OCI-LY7 (cell line): ENCODE measurements at regions of chr4 and their contacts with region 1.

Region 1: GRCh38 chr4:186297013-186297645 is 31.1 kb downstream of the F11 start:
- DNase-seq: peak; percentile 30
- H3K4me3 ChIP-seq: no peak overlapping the region
- H3K27ac ChIP-seq: no peak overlapping the region
- H3K4me1 ChIP-seq: no peaks in the 10 kb centered on the region
- CTCF ChIP-seq: peak; percentile 85

Region 2: GRCh38 chr4:185716577-185717376 is 580.4 kb before region 1 on chr4:
- CTCF ChIA-PET with region 1: no interaction called
- POLR2A ChIA-PET with region 1: no interaction called
- intact Hi-C with region 1: no loop called
- DNase-seq: no peak
- H3K4me3 ChIP-seq: no peak overlapping the region
- H3K27ac ChIP-seq: no peak overlapping the region
- H3K4me1 ChIP-seq: no peaks in the 10 kb centered on the region
- CTCF ChIP-seq: no peak

Region 3: DNA sequence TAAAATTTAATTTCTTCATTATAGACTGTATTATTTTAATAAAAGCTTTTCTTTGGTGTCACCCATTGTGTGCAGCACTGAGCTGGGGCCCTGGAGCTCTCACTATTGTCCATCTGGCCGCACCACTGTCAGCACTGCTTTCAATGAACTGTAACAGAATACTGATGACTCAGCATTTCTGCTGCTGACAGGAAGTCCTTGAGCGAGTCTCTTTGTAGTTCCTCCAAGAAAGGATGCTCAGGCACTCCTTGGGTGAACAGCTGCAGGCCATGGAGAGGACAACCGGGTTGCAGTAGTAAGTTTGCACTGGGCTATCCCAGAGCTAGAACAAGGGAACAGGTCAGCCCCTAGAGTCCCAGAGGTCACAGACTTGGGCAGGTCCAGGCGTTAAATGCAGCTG is 566.7 kb before region 1 on chr4:
- CTCF ChIA-PET with region 1: no interaction called
- POLR2A ChIA-PET with region 1: no interaction called
- intact Hi-C with region 1: no loop called
- DNase-seq: peak; percentile 78
- H3K4me3 ChIP-seq: peak overlapping the region; percentile 46
- H3K27ac ChIP-seq: peak overlapping the region; percentile 47
- H3K4me1 ChIP-seq: peaks cover 51% of the 10 kb centered on the region
- CTCF ChIP-seq: no peak

Region 4: GRCh38 chr4:186587416-186588018 is 290.4 kb after region 1 on chr4:
- CTCF ChIA-PET with region 1: no interaction called
- POLR2A ChIA-PET with region 1: no interaction called
- intact Hi-C with region 1: loop called (anchors 2 kb)
- DNase-seq: peak; percentile 46
- H3K4me3 ChIP-seq: no peak overlapping the region
- H3K27ac ChIP-seq: no peak overlapping the region
- H3K4me1 ChIP-seq: no peaks in the 10 kb centered on the region
- CTCF ChIP-seq: peak; percentile 92